ENCODE measurements at regions of chr7 and their contacts with region 1.

Region 1: DNA sequence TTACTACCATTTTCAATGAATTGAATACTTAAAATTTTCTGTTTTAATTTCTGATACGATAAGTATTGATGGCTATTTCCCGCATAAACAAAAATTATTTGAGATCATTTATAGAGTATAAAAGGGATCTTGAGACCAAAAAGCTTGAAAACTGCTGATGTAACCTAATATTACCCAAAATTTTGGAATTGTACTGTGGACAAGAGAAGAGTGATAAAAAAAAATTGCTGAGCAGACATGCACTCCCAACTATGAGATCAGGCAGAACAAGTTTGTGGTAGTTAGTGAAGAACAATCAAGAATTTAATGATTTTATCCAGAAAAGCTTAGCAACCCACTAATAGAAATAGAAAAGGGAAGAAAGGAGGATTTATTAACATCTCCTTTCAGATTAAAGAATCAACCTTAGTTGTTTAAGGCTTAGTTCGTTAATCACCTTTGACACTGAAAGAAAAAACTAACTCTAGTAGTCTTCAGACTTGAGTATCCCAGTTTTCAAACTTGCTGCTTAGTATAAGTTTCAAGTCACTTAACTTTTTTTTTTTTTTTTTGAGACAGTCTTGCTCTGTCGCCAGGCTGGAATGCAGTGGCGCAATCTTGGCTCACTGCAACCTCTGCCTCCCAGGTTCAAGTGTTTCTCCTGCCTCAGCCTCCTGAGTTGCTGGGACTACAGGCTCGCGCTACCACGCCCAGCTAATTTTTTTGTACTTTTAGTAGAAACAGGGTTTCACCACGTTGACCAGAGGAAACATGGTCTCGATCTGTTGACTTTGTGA is 50.6 kb upstream of the ZC3HAV1 start:
- DNase-seq: no peak
- H3K4me3 ChIP-seq: no peak overlapping the region
- H3K27ac ChIP-seq: no peak overlapping the region
- H3K4me1 ChIP-seq: no peaks in the 10 kb centered on the region
- CTCF ChIP-seq: no peak

Region 2: GRCh38 chr7:138595454-138595853 is 564.6 kb before region 1 on chr7:
- CTCF ChIA-PET with region 1: no interaction called
- POLR2A ChIA-PET with region 1: no interaction called
- intact Hi-C with region 1: no loop called
- DNase-seq: no peak
- H3K4me3 ChIP-seq: no peak overlapping the region
- H3K27ac ChIP-seq: no peak overlapping the region
- H3K4me1 ChIP-seq: no peaks in the 10 kb centered on the region
- CTCF ChIP-seq: no peak

Region 3: DNA sequence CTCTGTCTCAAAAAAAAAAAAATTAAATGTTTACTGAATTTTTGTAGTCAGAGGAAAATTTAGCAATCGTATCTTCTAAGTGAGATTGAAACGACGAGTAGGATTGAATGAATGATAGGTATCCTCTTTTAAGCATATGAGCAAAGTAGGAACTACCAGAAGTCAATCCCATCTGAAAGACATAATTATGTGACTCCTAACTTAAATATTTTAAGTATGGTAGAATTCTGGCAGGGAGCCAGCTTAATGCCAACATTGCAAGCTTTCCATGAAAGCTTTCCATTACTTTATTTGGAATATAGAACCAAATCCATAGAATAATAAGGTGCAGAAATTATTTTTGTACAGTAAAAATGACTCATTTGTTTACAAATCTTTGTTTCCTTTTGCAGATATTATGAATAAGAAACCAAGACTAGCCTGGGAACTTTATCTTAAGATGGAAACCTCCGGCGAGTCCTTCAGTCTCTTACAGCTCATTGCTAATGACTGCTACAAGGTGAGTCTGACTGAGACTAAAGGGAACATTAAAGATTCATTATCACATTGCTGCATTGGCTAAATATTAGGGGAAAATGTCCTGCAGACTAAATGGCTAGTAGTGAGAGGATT is 20.7 kb after region 1 on chr7:
- CTCF ChIA-PET with region 1: no interaction called
- POLR2A ChIA-PET with region 1: interaction called, 11 read pairs
- intact Hi-C with region 1: no loop called
- DNase-seq: no peak
- H3K4me3 ChIP-seq: no peak overlapping the region
- H3K27ac ChIP-seq: no peak overlapping the region
- H3K4me1 ChIP-seq: no peaks in the 10 kb centered on the region
- CTCF ChIP-seq: no peak

Region 4: DNA sequence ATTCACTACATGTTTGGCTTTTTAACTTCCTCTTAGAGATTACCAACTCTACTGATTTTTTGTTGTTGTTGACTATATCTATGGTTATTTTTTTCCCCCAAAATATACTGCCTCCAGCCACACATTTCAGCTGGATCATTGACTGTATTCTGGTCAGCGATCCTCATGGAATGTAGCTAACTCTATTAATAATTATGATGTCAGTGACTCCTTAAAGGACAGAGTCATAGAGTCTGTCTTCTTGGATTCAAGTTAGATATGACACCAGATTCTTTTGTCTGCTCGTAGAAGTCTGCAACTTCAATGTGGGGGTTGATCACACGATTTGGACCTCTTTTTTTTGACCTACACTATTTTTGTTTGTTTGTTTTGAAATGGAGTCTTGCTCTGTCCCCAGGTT is 104.1 kb after region 1 on chr7:
- CTCF ChIA-PET with region 1: no interaction called
- POLR2A ChIA-PET with region 1: no interaction called
- intact Hi-C with region 1: no loop called
- DNase-seq: no peak
- H3K4me3 ChIP-seq: no peak overlapping the region
- H3K27ac ChIP-seq: no peak overlapping the region
- H3K4me1 ChIP-seq: no peaks in the 10 kb centered on the region
- CTCF ChIP-seq: no peak

Measured in OCI-LY7 (cell line).